Activated CD8-positive, alpha-beta memory T cell treated with anti-CD3 and anti-CD28 coated beads, Interleukin-2, amount 10 ng/mL, durations not matched to agents 7 days and 5 days (primary cell): ENCODE measurements at regions of chr2 and their contacts with region 1.

Region 1: GRCh38 chr2:157628477-157629415 is at the start of gene ACVR1C:
- DNase-seq: peak; percentile 81
- ATAC-seq: peak; percentile 90
- H3K4me3 Mint-ChIP-seq: peak within 1 kb of the TSS; percentile 79
- H3K27ac Mint-ChIP-seq: peak within 1 kb of the TSS; percentile 73
- H3K4me1 Mint-ChIP-seq: peaks cover 32% of the 10 kb centered on the region
- H3K27me3 Mint-ChIP-seq: peaks cover 19% of the 10 kb centered on the region
- total RNA-seq, gene ACVR1C: 1.2 to 2.4 TPM

Region 2: DNA sequence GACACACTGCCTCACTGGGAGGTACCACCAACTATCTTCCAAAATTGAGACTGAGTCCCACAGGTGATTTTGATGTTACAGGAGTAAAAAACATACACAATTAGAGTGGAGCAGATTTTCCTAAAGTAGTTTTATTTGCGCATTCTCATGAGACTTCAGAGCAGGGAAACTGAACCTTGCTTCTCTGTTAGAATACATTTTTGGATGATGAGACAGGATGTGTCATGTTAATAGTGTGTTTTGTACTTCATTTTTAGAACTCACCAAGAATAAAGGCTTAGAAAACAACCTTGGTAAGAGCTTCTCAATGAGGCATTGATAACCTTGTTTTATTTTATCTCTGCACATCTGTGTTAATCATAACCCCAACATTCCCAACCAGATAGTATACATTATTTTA is 681.5 kb before region 1 on chr2:
- CTCF ChIA-PET with region 1: no interaction called
- DNase-seq: no peak
- ATAC-seq: no peak
- H3K4me3 Mint-ChIP-seq: no peak overlapping the region
- H3K27ac Mint-ChIP-seq: no peak overlapping the region
- H3K4me1 Mint-ChIP-seq: no peaks in the 10 kb centered on the region
- H3K27me3 Mint-ChIP-seq: no peaks in the 10 kb centered on the region

Region 3: DNA sequence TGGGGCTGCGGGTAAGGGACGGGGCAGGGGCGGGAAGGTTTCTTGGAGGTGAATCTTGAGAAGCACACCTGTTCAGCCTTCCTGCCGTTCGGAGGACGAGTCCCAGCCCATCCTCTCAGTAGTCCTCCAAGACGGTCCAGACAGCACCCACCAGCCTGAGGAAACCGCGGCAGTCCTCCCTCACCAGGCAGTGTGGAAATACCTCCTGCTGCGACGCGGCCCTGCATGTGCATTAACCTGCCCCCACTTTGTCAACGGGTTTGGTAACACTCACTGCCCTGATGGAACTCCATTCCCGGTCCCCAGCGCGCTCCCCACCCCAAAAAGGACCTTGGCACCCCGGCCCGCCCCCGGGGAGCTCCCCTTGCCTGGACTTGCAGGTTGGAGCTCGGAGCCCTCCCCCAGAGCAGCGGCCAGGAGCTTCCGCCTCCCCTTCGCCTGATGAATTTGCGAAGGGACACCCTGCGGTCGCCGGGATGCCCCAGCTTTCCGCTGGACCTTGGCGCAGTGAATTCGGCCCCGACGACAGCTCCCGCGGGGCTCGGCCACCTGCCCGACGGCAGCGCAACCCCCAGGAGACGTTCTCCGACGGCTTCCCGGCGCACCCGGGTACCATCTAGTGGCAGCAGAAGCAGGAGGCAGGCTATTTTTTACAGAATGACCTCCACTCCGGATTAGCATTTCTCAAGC is 31.6 kb before region 1 on chr2:
- CTCF ChIA-PET with region 1: interaction called, 29 read pairs
- DNase-seq: peak; percentile 69
- ATAC-seq: peak; percentile 94
- H3K4me3 Mint-ChIP-seq: peak overlapping the region; percentile 53
- H3K27ac Mint-ChIP-seq: no peak overlapping the region
- H3K4me1 Mint-ChIP-seq: peaks cover 15% of the 10 kb centered on the region
- H3K27me3 Mint-ChIP-seq: peaks cover 20% of the 10 kb centered on the region

Region 4: GRCh38 chr2:157603198-157603597 is 25.5 kb before region 1 on chr2:
- CTCF ChIA-PET with region 1: interaction called, 29 read pairs
- DNase-seq: no peak
- ATAC-seq: no peak
- H3K4me3 Mint-ChIP-seq: no peak overlapping the region
- H3K27ac Mint-ChIP-seq: no peak overlapping the region
- H3K4me1 Mint-ChIP-seq: peaks cover 8% of the 10 kb centered on the region
- H3K27me3 Mint-ChIP-seq: peaks cover 14% of the 10 kb centered on the region

Region 5: GRCh38 chr2:157644776-157645175 is 16.0 kb after region 1 on chr2:
- CTCF ChIA-PET with region 1: interaction called, 11 read pairs
- DNase-seq: no peak
- ATAC-seq: no peak
- H3K4me3 Mint-ChIP-seq: no peak overlapping the region
- H3K27ac Mint-ChIP-seq: no peak overlapping the region
- H3K4me1 Mint-ChIP-seq: no peaks in the 10 kb centered on the region
- H3K27me3 Mint-ChIP-seq: peaks cover 2% of the 10 kb centered on the region